Calu3 (cell line): ENCODE measurements at regions of chr10 and their contacts with region 1.

Region 1: GRCh38 chr10:87585565-87586514 is 73.8 kb upstream of the PAPSS2 start:
- DNase-seq: peak; percentile 41
- H3K4me3 Mint-ChIP-seq: no peak overlapping the region
- H3K27ac Mint-ChIP-seq: peak overlapping the region; percentile 44
- H3K4me1 Mint-ChIP-seq: peaks cover 36% of the 10 kb centered on the region
- H3K27me3 Mint-ChIP-seq: no peaks in the 10 kb centered on the region
- CTCF ChIP-seq: no peak

Region 2: DNA sequence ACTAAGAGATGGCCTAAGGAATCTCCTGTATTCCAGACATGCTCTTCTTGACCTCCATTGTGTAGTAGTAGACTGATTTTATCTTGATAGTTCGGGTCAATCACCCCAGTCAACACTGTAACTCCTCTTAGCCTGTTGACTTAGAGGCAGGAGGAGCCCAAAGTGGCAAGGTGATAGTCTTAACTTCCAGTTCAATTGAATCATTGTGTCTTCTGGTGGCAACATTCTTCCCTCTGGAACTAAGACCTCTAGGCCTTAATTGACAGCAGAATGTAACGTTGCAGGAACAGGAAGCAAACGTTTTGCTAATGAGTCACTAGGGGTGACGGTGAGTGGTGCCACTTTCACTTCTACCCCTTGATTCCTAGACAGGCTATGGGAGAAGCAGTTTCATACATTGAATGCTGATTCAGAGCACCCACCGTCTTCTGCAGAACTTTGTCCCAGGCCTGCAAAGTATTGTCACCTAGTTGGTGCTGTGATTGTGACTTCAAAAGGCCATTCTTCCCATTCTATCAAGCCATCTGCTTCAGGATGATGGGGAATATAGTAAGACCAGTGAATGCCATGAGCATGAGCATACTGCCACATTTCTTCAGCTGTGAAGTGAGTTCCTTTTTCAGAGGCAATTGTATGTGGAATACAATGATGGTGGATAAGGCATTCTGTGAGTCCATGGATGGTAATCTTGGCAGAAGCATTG is 49.9 kb after region 1 on chr10:
- CTCF ChIA-PET with region 1: no interaction called
- intact Hi-C with region 1: loop called (anchors 5 kb)
- DNase-seq: peak; percentile 55
- H3K4me3 Mint-ChIP-seq: no peak overlapping the region
- H3K27ac Mint-ChIP-seq: peak overlapping the region; percentile 90
- H3K4me1 Mint-ChIP-seq: peaks cover 26% of the 10 kb centered on the region
- H3K27me3 Mint-ChIP-seq: no peaks in the 10 kb centered on the region
- CTCF ChIP-seq: no peak

Region 3: DNA sequence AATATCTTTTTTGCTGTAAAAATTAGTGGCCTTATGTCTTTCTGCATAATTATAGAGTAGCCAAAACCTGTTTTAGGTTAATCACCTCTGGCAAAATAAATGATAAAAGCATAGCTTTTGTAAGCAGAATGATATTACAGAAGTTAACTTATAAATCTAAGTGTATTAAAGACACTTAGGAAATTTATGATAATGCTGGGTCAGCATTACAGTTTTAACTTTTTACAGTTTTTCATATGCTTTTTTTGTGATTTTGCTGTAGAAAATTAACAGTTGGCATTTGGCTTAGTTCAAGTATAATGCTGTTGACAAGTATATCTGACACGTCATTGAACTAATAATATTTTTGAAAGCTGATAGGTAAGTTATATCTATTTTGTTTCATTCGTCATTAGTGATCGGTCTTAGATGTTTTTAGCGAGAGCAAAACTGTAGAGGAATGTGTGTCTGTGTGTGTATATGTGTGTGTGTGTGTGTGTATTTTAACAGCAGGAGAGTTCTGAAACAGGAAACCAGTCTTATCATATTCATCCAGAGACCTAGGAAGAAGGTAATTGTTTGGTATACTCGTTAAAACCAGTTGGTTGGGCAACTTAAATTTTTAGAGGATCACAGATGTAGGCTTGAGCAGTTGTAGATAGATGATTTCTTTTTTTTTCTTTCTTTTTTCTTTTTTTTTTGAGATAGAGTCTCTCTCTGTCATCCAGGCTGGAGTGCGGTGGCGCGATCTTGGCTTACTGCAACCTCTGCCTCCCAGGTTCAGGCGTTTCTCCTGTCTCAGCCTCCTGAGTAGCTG is 293.0 kb after region 1 on chr10:
- CTCF ChIA-PET with region 1: no interaction called
- intact Hi-C with region 1: no loop called
- DNase-seq: no peak
- H3K4me3 Mint-ChIP-seq: no peak overlapping the region
- H3K27ac Mint-ChIP-seq: no peak overlapping the region
- H3K4me1 Mint-ChIP-seq: no peaks in the 10 kb centered on the region
- H3K27me3 Mint-ChIP-seq: no peaks in the 10 kb centered on the region
- CTCF ChIP-seq: no peak

Region 4: DNA sequence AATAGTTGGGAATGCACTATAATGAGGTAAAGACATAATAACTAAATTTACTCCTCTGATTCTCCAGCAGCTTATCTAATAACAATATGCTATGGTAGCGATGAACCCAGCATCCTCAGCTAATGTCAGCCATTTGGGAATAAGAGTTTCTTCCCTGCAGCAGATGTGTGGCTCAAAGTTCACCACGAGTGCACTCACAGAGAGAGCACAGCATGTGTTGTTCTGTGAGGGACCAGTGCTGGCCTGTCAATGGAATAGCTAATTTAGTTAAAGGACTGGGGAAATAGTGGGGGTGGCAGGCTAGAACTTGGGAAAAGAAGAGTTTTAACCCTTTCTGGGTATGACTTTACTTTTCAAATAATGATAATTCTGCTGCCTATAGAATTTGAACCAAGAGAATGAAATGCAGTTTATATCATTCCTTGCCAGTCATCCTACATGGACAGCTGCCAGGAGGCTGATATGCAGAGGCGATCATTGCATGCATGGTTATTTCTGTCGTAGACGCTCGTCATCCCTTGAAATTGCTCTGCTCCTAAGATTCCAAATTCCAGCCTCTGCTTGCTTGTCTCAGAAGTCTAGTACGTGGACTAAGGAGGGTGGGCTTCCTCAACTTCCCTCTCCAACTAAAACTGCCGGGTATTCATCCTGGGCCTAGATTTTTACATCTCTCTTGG is 641.6 kb after region 1 on chr10:
- CTCF ChIA-PET with region 1: no interaction called
- intact Hi-C with region 1: no loop called
- DNase-seq: no peak
- H3K4me3 Mint-ChIP-seq: no peak overlapping the region
- H3K27ac Mint-ChIP-seq: no peak overlapping the region
- H3K4me1 Mint-ChIP-seq: peaks cover 5% of the 10 kb centered on the region
- H3K27me3 Mint-ChIP-seq: no peaks in the 10 kb centered on the region
- CTCF ChIP-seq: no peak